ENCODE measurements at regions of chr3 and their contacts with region 1.

Region 1: DNA sequence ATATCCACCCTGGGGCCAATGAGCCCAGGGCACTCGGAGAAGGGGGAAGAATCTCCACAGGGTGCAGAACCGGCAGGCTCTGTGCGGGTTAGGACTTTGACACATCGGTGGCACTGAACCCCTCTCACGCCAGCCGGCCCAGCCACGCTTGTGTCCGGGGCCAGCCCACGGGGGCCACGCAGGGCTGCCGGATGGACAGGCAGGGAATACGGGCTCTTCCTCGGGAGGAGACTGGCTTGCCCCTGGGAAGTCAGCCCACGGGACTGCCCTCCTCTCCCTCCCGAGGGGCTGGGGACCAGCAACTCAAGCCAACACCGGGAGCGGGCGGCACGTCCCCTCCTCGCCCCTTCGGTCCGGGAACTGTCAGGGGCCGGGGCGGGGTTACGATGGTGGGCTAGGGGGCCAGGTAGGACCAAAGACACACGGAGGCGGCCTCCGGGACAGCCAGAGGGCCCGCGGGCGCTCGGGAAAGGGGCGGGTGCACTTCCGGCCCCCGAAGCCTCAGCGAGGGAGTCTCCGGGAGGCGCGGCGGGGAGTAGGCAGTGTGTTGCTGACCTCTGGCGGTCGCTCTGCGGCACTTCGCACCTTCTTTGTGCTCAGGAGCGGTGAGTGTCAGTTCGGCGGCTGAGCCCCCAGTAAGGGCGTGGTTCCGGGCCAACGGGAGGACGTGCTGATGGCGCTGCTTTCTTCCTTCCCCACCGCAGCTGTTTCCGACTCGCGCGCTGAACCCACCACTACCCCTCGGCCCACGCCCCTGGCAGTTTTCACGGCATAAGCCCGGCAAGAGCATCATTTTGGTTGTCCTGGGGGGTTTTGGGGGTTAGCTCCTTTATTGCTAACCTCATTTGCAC is 5.1 kb upstream of the CYP8B1 start:
- DNase-seq: peak; percentile 72 to 95 (median 87)

Region 2: GRCh38 chr3:42780892-42781700 is 99.7 kb before region 1 on chr3:
- intact Hi-C with region 1: loop called (anchors 5 kb)
- DNase-seq: peak in 7 of 42 donors; percentile 23 to 70 (median 43)

Region 3: DNA sequence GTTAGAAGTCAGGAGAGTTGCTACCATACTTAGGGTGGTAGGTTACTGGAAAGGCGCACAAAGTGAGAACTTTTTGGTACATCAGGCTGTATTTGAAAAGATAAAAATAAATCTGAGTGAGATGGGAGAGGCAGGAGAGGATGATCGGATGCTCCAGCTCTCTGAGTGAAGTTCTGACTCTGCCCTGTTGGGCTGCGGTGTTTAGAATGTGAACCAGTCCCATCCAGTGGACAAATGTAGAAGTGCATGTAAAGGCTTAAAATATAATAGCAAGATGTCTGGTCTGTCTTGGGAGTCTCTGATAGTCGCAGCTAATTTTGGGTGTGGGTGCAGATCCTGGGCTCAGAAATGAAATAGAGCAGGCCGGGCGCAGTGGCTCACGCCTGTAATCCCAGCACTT is 41.2 kb before region 1 on chr3:
- intact Hi-C with region 1: loop called (anchors 10 kb)
- DNase-seq: peak in 39 of 42 donors; percentile 17 to 80 (median 50)